Activated CD8-positive, alpha-beta T cell treated with anti-CD3 and anti-CD28 coated beads for 36 hours (primary cell): ENCODE measurements at regions of chr20 and their contacts with region 1.

Region 1: DNA sequence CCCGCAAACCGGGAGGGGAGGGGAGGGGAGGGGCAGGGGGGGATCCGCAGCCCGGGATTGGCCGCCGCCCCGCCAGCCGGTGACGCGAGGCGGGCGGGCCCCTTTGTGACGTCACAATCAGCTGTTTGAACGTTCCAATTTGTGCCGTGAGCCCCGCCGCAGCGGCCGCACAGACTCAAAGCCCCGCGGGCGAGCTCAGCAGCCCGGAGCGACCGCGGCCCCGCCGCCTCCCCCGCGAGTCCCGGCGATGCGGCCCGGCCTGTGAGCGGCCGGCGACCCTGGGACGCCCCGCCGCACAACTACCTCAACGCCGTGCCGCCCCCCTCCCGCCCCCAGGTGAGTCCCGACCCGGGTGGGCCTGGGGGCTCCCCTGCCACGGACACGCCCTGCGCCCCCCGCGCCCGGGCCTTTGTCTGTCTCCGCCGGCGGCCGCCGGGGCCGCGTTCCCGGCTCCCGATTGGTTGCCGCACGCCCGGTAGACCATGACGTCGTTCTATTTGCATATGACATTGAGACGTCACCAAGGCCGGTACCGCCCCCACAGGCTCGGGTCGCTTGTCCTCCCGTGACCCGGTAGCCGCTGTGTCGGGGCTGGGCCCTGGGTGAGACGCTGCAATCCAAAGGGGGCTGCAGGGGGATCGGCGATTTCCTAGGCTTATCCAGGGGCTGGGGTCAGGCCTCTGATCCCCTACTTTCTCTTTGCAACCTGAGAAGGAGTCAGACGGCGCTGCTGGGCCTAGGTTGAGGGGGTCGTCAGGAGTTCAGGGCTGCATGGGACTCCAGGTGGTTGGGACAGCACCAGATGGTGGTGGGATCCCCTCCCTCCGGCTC is at the start of gene TP53INP2:
- DNase-seq: peak; percentile 90
- ATAC-seq: peak; percentile 13
- H3K4me3 Mint-ChIP-seq: peak within 1 kb of the TSS; percentile 81
- H3K27ac Mint-ChIP-seq: peak within 1 kb of the TSS; percentile 77
- H3K4me1 Mint-ChIP-seq: peaks cover 18% of the 10 kb centered on the region
- H3K27me3 Mint-ChIP-seq: peaks cover 7% of the 10 kb centered on the region
- CTCF ChIP-seq: no peak
- total RNA-seq, gene TP53INP2: 4.0 to 4.6 TPM

Region 2: GRCh38 chr20:34528921-34529297 is 175.5 kb before region 1 on chr20:
- CTCF ChIA-PET with region 1: interaction called, 14 read pairs
- POLR2A ChIA-PET with region 1: no interaction called
- intact Hi-C with region 1: no loop called
- DNase-seq: no peak
- ATAC-seq: no peak
- H3K4me3 Mint-ChIP-seq: no peak overlapping the region
- H3K27ac Mint-ChIP-seq: no peak overlapping the region
- H3K4me1 Mint-ChIP-seq: peaks cover 6% of the 10 kb centered on the region
- H3K27me3 Mint-ChIP-seq: no peaks in the 10 kb centered on the region
- CTCF ChIP-seq: no peak

Region 3: GRCh38 chr20:34538671-34539123 is 165.7 kb before region 1 on chr20:
- CTCF ChIA-PET with region 1: interaction called, 56 read pairs
- POLR2A ChIA-PET with region 1: interaction called, 3 read pairs
- intact Hi-C with region 1: loop called (anchors 5 kb)
- DNase-seq: peak; percentile 72
- ATAC-seq: peak; percentile 85
- H3K4me3 Mint-ChIP-seq: no peak overlapping the region
- H3K27ac Mint-ChIP-seq: no peak overlapping the region
- H3K4me1 Mint-ChIP-seq: peaks cover 7% of the 10 kb centered on the region
- H3K27me3 Mint-ChIP-seq: no peaks in the 10 kb centered on the region
- CTCF ChIP-seq: peak; percentile 83

Region 4: GRCh38 chr20:34676642-34677373 is 27.6 kb before region 1 on chr20 and contains the start of gene PIGU:
- CTCF ChIA-PET with region 1: interaction called, 4 read pairs
- POLR2A ChIA-PET with region 1: interaction called, 6 read pairs
- intact Hi-C with region 1: loop called (anchors 2 kb)
- DNase-seq: peak; percentile 97
- ATAC-seq: peak; percentile 97
- H3K4me3 Mint-ChIP-seq: peak within 1 kb of the TSS; percentile 94
- H3K27ac Mint-ChIP-seq: peak within 1 kb of the TSS; percentile 96
- H3K4me1 Mint-ChIP-seq: peaks cover 24% of the 10 kb centered on the region
- H3K27me3 Mint-ChIP-seq: no peaks in the 10 kb centered on the region
- CTCF ChIP-seq: no peak
- total RNA-seq, gene PIGU: 19.4 to 20.9 TPM

Region 5: DNA sequence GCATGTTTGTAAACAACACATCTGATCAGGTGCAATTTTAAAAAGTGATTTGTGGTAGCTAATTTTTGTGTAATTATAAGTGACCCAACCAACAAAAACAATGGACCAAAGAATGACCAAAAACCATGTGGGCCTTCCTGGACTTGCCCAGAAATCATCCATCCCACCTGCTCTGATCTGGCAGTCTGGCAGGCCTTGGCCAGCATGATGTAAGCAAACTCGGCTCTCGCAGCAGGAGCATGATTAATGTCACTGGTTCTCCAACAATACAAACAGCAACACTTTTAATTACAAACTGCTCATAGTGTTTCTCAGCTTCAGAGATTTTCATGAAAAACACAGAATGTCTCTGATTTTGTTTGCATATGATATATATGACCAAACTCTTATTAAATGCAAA is 15.9 kb after region 1 on chr20:
- CTCF ChIA-PET with region 1: interaction called, 10 read pairs
- POLR2A ChIA-PET with region 1: no interaction called
- intact Hi-C with region 1: no loop called
- DNase-seq: no peak
- ATAC-seq: no peak
- H3K4me3 Mint-ChIP-seq: no peak overlapping the region
- H3K27ac Mint-ChIP-seq: no peak overlapping the region
- H3K4me1 Mint-ChIP-seq: peaks cover 17% of the 10 kb centered on the region
- H3K27me3 Mint-ChIP-seq: no peaks in the 10 kb centered on the region
- CTCF ChIP-seq: no peak

Region 6: DNA sequence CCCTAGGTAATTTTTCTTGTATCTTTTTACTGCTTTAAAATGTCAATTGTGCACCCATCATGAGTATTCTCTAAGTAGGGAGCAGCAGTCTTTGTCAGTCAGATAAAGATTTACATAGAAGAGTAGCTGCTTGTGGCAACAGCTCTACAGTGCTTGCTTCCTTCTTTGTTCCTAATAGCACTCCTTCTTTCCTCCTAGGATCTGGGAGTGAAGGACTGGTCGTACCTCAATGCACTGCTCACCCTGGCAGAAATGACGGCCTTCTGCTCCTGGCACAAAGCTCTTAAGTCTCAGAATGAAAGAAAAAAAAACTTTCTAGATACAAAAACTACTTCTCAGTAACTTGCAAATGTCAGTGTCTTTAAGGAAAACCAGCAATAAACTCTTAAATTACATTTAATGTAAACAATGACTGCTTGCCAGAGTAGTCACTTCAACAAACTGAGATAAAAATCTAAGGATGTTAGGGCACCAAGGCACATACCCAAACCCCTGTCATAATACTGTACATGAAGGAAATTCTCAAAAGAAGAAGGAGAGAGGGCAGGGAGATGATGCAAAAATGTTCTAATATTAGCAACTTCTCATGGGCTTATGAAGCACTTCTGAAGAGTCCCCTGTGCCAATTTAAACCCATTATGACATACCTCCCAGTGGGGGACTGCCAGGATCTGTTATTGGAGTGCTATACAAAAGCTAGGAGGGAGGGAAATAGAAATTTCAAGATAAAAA is 87.1 kb after region 1 on chr20:
- CTCF ChIA-PET with region 1: no interaction called
- POLR2A ChIA-PET with region 1: no interaction called
- intact Hi-C with region 1: no loop called
- DNase-seq: no peak
- ATAC-seq: no peak
- H3K4me3 Mint-ChIP-seq: no peak overlapping the region
- H3K27ac Mint-ChIP-seq: no peak overlapping the region
- H3K4me1 Mint-ChIP-seq: peaks cover 5% of the 10 kb centered on the region
- H3K27me3 Mint-ChIP-seq: no peaks in the 10 kb centered on the region
- CTCF ChIP-seq: no peak